ENCODE measurements at regions of chr1 and their contacts with region 1.

Region 1: GRCh38 chr1:30379684-30380624 is 343.4 kb downstream of the MATN1 start:
- DNase-seq: peak; percentile 70

Region 2: DNA sequence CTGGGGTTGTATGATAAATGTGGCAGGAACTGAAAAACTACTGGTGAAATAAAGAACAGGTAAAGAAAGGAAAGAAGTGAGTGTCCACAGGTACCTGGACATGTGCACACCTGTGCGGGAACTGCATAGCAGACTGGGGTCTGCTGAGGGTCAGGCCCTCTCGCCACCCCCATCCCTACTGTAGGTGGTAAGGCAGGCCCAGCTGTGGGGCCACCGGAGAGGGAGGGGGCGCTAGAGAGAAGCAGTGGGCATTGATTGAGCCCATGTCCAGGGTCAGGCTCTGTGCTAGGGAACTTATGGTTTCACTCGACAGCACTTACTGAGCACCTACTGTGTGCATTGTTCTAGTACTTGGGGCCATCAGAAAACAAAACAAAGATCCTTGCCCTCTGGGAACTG is 57.1 kb before region 1 on chr1:
- intact Hi-C with region 1: no loop called
- DNase-seq: peak; percentile 35

Region 3: DNA sequence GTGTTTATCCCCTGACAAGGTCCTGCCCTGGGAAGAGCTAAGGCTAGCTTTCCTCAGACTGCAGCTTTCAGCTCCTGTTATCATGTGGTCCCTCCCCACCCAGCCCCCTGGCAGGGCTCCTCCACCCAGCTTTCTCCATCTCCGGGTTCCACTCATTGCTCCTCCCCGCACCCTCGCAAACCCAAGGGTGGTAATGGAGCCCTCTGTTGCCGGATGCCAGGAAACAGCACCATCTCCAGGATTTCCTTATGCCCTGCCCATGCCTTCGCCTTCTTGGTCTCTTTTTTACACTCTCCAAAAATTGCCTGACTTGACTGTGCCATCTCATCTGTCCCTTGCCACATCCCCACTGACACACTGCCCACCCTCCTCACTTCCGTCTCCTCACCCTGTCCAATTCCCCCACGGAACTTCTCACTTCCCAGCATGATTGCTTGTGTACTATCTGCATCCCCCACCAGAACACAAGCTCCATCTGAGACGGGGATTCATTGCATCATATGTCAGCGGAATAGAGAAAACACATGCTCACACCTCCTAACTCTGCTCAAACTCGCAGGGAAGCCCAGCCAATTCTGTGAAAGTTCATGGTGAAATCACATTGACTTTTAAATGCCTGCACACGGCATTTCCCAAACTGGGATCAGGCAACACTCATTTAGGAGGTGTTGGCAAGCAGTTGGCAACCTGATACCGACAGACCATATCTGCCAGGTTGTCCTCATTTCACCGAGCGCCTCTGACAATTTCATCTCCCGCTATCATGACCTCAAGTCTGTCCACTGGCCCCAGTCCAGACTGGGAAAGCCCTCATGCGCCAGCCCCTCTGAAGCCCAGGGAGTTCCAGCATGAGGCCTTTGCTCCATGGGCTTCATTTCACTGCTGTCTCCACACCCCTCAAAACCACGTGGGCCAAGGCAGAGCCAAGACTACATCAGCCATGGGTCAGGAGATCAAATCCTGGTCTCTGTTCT is 142.4 kb after region 1 on chr1:
- intact Hi-C with region 1: loop called (anchors 5 kb)
- DNase-seq: peak; percentile 88

Region 4: GRCh38 chr1:30707412-30708360 is 327.7 kb after region 1 on chr1:
- intact Hi-C with region 1: loop called (anchors 10 kb)
- DNase-seq: peak; percentile 86